ENCODE measurements at regions of chr12 and their contacts with region 1.

Region 1: DNA sequence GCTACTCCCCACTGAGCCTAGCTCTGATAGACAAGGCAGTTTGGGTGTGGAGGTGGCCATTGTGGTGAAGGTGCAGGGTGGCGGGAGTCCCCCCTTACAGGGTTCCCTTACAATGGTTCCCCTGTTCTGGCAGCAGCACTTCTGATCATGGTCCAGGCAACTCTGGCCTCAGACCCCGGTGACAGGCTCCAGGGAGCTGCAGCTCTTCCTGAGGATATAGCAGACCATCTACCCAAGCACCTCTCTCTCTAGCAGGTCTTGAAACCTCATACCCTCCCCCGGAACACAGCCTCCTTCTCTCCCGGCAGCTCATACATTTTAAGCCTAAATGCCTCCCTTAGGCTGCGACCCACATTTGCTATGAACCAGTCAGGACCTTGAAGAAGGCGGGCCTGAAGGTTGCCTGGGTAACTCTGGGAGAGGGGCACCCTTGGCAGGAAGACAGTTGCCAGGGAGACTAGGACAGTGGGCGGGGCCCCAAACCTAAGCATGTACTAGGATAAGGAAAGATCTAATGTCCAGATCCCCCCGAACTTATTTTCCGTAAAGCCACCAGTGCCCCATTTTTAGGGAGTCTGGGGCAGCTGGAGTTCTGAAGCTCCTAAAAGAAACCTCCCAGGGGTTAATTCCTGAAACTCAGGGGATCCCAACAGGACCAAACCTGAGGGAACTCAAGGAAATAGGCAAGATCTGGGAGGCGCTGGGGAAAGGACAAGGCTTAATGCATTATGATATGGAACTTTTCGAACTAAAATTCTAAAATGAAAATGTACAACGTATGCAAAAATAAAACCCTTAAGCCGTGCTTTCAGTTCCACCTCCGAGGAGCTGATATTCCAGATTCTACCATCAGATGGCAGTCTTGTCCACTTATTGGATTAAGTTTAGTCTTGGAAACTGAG is 4.5 kb upstream of the GDF11 start:
- DNase-seq: peak; percentile 87
- H3K4me3 Mint-ChIP-seq: peak overlapping the region; percentile 77
- H3K27ac Mint-ChIP-seq: peak overlapping the region; percentile 85
- H3K4me1 Mint-ChIP-seq: peaks cover 21% of the 10 kb centered on the region
- H3K27me3 Mint-ChIP-seq: no peaks in the 10 kb centered on the region

Region 2: DNA sequence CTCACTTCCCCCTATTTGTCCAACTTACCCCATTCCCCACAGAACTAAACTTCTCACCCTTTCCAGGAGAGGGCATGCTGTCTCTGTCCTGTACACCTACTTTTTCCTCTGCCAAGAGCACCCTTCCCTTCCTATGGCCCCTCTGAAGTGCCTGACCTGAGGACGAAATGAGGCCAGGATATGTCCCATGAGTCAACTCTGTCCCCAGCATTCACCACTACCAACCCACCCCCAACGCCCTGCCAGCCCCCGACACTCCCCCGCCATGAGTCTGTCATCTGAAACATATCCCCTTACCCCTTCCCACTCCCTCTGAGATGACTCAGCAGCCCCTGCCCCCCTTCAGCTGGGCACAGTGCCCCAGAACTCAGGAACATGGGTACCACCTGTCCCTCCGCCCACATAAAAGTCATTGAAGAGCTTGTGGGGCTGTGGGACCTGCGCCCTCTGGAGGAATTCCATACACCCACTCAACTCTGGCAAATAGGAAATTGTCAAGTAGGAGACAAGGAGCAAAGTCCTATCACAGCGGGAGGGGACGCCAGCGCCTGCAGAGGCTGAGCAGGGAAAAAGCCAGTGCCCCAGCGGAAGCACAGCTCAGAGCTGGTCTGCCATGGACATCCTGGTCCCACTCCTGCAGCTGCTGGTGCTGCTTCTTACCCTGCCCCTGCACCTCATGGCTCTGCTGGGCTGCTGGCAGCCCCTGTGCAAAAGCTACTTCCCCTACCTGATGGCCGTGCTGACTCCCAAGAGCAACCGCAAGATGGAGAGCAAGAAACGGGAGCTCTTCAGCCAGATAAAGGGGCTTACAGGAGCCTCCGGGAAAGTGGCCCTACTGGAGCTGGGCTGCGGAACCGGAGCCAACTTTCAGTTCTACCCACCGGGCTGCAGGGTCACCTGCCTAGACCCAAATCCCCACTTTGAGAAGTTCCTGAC is 57.0 kb before region 1 on chr12:
- CTCF ChIA-PET with region 1: interaction called, 6 read pairs
- POLR2A ChIA-PET with region 1: no interaction called
- intact Hi-C with region 1: loop called (anchors 1 kb)
- DNase-seq: no peak
- H3K4me3 Mint-ChIP-seq: no peak overlapping the region
- H3K27ac Mint-ChIP-seq: no peak overlapping the region
- H3K4me1 Mint-ChIP-seq: peaks cover 11% of the 10 kb centered on the region
- H3K27me3 Mint-ChIP-seq: peaks cover 18% of the 10 kb centered on the region

Region 3: GRCh38 chr12:55797068-55797467 is 58.7 kb after region 1 on chr12:
- CTCF ChIA-PET with region 1: interaction called, 69 read pairs
- POLR2A ChIA-PET with region 1: no interaction called
- intact Hi-C with region 1: loop called (anchors 1 kb)
- DNase-seq: no peak
- H3K4me3 Mint-ChIP-seq: no peak overlapping the region
- H3K27ac Mint-ChIP-seq: no peak overlapping the region
- H3K4me1 Mint-ChIP-seq: peaks cover 17% of the 10 kb centered on the region
- H3K27me3 Mint-ChIP-seq: no peaks in the 10 kb centered on the region

Region 4: GRCh38 chr12:55829967-55830600 is 91.7 kb after region 1 on chr12:
- CTCF ChIA-PET with region 1: interaction called, 19 read pairs
- POLR2A ChIA-PET with region 1: no interaction called
- intact Hi-C with region 1: no loop called
- DNase-seq: no peak
- H3K4me3 Mint-ChIP-seq: peak overlapping the region; percentile 95
- H3K27ac Mint-ChIP-seq: peak overlapping the region; percentile 82
- H3K4me1 Mint-ChIP-seq: peaks cover 39% of the 10 kb centered on the region
- H3K27me3 Mint-ChIP-seq: no peaks in the 10 kb centered on the region

Region 5: GRCh38 chr12:55973598-55974307 is 235.4 kb after region 1 on chr12 and contains the start of gene RAB5B:
- CTCF ChIA-PET with region 1: interaction called, 18 read pairs
- POLR2A ChIA-PET with region 1: interaction called, 6 read pairs
- intact Hi-C with region 1: no loop called
- DNase-seq: peak; percentile 99
- H3K4me3 Mint-ChIP-seq: no peak within 1 kb of the TSS
- H3K27ac Mint-ChIP-seq: no peak within 1 kb of the TSS
- H3K4me1 Mint-ChIP-seq: peaks cover 19% of the 10 kb centered on the region
- H3K27me3 Mint-ChIP-seq: no peaks in the 10 kb centered on the region
- total RNA-seq, gene RAB5B: 44.8 to 46.4 TPM

Region 6: DNA sequence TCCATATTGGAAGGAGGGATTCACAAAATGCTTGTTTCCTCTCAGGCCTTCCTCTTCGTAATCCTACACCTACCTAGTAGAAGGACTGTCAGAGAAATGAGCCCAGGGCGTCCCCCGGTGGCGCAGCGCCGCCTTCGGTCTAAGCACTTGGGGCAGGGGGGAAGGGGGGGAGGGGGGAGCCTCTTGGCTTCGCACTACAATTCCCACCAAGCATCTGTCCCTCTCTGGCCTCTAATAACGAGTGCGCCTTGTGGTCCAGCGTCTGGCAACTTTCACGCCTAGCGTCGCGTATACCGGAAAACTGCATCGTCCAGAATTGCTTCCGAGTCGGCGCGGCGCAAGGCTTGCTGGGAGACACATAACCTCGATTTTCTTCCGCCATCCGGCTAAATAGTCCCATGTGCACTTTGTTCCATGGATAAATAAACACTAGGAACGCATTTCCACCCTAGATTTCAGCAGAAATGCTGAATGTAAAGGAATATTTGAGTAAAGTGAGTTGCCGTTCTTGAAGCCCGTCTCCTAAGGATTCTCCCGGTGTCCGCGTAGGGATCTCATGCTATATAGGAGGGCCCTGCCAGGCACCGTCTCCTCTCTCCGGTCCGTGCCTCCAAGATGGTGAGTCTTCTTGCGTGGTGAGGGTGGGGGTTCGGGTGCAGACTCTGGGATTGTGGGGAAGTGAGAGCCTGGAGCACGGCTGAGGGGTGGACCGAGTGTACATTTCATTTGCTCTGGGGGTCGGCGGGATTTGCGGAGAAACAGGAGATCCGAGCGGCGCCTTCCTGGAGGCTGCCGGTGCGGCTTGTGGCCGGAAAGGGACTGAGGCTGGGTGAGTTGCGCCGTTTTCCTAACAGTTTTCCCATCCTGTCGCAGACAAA is 303.4 kb after region 1 on chr12 and contains the start of gene RPS26:
- CTCF ChIA-PET with region 1: interaction called, 13 read pairs
- POLR2A ChIA-PET with region 1: interaction called, 3 read pairs
- intact Hi-C with region 1: loop called (anchors 1 kb)
- DNase-seq: peak; percentile 95
- H3K4me3 Mint-ChIP-seq: peak within 1 kb of the TSS; percentile 98
- H3K27ac Mint-ChIP-seq: peak within 1 kb of the TSS; percentile 98
- H3K4me1 Mint-ChIP-seq: peaks cover 47% of the 10 kb centered on the region
- H3K27me3 Mint-ChIP-seq: no peaks in the 10 kb centered on the region
- total RNA-seq, gene RPS26: 28.1 to 40.7 TPM

Measured in activated CD4-positive, alpha-beta memory T cell treated with anti-CD3 and anti-CD28 coated beads for 36 hours (primary cell).